ENCODE measurements at regions of chr10 and their contacts with region 1.

Region 1: GRCh38 chr10:110311357-110311949 is 6.7 kb upstream of the SMNDC1 start:
- DNase-seq: peak; percentile 52
- H3K4me3 Mint-ChIP-seq: no peak overlapping the region
- H3K27ac Mint-ChIP-seq: peak overlapping the region; percentile 9
- H3K4me1 Mint-ChIP-seq: peaks cover 31% of the 10 kb centered on the region
- H3K27me3 Mint-ChIP-seq: peaks cover 2% of the 10 kb centered on the region

Region 2: GRCh38 chr10:110502851-110503301 is 191.4 kb after region 1 on chr10:
- CTCF ChIA-PET with region 1: interaction called, 33 read pairs
- POLR2A ChIA-PET with region 1: no interaction called
- intact Hi-C with region 1: loop called (anchors 1 kb)
- DNase-seq: peak; percentile 58
- H3K4me3 Mint-ChIP-seq: peak overlapping the region; percentile 96
- H3K27ac Mint-ChIP-seq: peak overlapping the region; percentile 97
- H3K4me1 Mint-ChIP-seq: peaks cover 78% of the 10 kb centered on the region
- H3K27me3 Mint-ChIP-seq: no peaks in the 10 kb centered on the region

Region 3: DNA sequence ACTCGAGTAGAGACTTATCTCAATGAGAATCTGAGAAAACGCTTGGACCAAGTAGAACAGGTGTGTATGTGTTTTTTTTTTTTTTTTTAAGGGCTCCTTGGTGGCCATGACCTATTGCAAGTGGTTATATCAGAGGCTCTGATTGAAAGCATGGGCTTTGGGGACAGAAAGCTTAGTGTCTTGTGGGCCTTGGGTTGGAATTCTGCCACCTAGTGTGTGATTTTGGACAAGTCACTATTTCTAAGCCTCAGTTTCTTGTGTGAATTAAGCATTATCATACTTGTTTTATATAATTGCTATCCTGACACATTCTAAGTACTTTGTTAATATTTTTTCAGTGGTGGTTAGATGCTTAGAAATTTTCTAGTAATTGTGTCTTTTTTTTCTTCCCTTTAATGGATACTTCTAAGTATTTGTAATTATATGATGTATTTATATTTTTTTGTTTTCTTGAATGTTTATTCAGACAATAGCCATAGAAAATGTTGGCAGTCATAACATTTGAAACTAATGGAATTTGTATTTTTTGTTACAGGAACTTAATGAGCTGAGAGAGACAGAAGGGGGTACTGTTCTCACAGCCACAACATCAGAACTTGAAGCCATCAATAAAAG is 289.1 kb after region 1 on chr10:
- CTCF ChIA-PET with region 1: interaction called, 90 read pairs
- POLR2A ChIA-PET with region 1: no interaction called
- intact Hi-C with region 1: loop called (anchors 1 kb)
- DNase-seq: no peak
- H3K4me3 Mint-ChIP-seq: no peak overlapping the region
- H3K27ac Mint-ChIP-seq: peak overlapping the region; percentile 13
- H3K4me1 Mint-ChIP-seq: no peaks in the 10 kb centered on the region
- H3K27me3 Mint-ChIP-seq: no peaks in the 10 kb centered on the region